Activated naive CD4-positive, alpha-beta T cell treated with anti-CD3 and anti-CD28 coated beads, Interleukin-2, amount 10 ng/mL, durations not matched to agents 7 days and 5 days (primary cell): ENCODE measurements at regions of chr14 and their contacts with region 1.

Region 1: DNA sequence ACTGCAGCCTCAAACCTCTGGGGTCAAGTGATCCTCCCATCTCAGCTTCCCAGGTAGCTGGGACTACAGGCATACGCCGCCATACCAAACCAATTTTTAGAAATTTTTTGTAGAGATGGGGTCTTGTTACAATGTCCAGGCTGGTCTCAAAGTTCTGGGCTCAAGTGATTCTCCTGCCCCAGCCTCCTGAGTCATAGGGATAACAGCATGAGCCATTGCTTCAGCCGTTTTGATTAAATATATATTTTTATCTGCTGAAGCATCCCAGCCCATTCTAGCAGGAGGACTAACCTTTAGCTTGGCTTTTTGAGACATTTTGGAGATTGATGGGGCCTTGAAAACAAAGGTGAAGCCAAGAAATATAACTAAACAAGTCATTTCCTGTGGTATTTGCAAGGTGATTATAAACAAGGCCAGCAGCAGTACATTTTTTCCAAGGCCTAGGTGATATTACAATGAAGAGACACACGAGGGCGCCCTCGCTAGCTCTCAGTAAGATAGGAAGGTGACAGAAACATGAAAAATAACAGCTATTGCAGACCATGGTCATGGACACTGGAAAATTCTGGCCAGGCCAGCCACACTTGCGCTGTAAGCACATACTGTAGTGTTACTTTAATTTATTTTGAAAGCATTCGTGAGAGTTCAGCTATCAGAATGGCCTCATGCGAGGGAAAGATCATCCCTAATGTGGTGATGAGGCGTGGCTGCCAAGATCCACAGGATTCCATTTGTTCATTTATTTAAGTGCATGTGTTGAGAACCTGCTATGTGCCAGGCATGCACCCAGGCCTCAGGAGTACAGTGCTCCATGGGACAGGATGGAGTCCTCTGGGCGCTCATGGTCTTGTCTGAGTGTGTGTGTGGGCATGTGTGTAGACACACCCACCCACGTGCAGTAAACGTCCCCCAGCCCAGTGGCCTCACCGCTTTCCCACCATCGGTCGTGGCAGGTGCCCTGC is 63.5 kb downstream of the DGLUCY start:
- DNase-seq: peak; percentile 81
- H3K4me3 Mint-ChIP-seq: no peak overlapping the region
- H3K27ac Mint-ChIP-seq: peak overlapping the region; percentile 90
- H3K4me1 Mint-ChIP-seq: peaks cover 20% of the 10 kb centered on the region
- H3K27me3 Mint-ChIP-seq: no peaks in the 10 kb centered on the region

Region 2: DNA sequence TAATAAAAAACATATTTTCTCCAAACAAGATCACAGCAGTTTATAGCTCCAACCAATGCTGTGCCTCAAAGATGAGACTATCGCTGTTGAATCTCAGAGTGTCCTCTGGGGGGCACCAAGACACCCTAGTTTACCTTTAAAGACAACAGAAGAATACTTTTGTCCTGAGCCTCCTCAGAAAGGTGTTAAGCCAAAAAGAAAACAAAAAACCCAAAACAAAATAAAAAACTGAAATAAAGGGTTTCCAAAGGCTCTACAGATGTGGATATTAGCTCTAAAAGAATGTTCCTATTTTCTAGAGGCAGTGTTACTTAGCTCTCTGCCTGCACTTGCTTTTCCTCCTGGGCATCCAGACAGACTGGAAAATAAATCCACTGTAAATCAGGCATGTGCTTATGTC is 274.3 kb before region 1 on chr14:
- CTCF ChIA-PET with region 1: interaction called, 161 read pairs
- DNase-seq: peak; percentile 74
- H3K4me3 Mint-ChIP-seq: no peak overlapping the region
- H3K27ac Mint-ChIP-seq: no peak overlapping the region
- H3K4me1 Mint-ChIP-seq: peaks cover 24% of the 10 kb centered on the region
- H3K27me3 Mint-ChIP-seq: no peaks in the 10 kb centered on the region

Region 3: DNA sequence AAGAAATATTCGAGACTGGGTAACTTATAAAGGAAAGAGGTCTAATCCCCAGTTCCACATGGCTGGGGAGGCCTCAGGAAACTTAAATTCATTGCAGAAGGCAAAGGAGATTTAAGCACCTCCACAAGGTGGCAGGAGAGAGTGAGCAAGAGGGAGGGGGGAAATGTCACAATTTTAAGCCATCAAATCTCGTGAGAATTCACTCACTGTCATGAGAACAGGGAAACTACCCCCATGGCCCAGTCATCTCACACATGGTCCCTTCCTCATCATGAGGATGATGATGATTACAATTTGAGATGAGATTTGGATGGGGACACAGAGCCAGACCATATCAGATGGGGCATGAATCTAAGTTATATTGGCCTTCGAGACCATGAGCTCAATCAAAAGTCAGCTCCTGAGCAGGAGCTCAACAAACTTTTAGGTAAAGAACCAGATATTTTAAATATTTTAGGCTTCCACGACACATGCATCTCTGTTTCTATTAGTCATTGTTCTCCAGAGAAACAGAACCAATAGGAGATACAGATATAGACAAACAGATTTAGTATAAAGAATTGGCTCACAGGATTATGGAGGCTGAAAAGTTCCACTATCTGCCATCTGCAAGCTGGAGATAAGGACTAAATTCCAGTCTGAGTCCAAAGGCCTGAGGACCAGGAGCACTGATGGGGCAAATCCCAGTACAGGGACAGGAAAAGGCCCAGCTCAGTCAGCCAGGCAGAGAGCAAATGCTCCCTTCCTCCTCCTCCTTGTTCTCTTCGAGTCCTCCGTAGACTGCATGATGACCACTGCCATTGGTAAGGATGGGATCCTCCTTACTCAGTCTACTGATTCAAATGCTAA is 38.6 kb before region 1 on chr14:
- CTCF ChIA-PET with region 1: interaction called, 38 read pairs
- DNase-seq: peak; percentile 67
- H3K4me3 Mint-ChIP-seq: no peak overlapping the region
- H3K27ac Mint-ChIP-seq: peak overlapping the region; percentile 53
- H3K4me1 Mint-ChIP-seq: peaks cover 59% of the 10 kb centered on the region
- H3K27me3 Mint-ChIP-seq: no peaks in the 10 kb centered on the region

Region 4: GRCh38 chr14:91228112-91229004 is 51.0 kb after region 1 on chr14:
- CTCF ChIA-PET with region 1: interaction called, 26 read pairs
- DNase-seq: peak; percentile 87
- H3K4me3 Mint-ChIP-seq: peak overlapping the region; percentile 21
- H3K27ac Mint-ChIP-seq: peak overlapping the region; percentile 99
- H3K4me1 Mint-ChIP-seq: peaks cover 94% of the 10 kb centered on the region
- H3K27me3 Mint-ChIP-seq: no peaks in the 10 kb centered on the region

Region 5: DNA sequence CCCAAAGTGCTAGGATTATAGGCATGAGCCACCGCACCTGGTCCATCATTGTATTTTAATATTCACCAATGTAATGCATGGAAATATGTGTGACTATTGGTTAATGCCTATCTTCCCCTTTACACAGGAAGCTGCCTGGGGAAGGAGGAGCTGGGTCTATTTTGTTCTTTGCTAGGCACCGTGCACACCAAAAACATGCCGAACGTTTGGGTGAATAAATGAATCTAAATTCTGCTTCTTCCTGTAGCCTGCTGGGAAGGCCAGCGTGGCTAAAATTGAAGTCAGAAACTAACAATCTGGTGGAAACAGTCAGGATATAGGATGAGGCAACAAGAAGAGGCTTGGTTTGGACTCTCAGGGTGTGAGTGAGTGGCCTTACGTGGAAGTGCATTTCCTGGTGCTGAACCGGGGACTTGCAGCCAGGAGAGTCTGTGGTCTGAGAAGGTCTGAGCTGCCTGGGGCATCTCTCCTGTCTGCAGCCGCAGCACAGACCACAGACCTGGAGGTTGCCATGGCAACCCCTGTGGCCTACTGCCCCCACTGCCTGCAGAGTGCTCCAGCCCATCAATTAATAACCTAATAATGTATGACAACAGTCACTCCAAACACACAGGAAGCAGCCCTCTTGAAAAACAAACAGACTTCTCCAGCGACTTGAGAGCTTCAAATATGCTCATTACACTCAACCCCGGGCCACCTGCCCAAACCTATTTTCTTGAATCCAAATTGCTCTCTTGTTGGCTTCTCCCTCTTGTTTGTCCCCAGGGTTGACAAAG is 72.7 kb after region 1 on chr14:
- CTCF ChIA-PET with region 1: interaction called, 70 read pairs
- DNase-seq: peak; percentile 68
- H3K4me3 Mint-ChIP-seq: peak overlapping the region; percentile 55
- H3K27ac Mint-ChIP-seq: peak overlapping the region; percentile 98
- H3K4me1 Mint-ChIP-seq: peaks cover 90% of the 10 kb centered on the region
- H3K27me3 Mint-ChIP-seq: no peaks in the 10 kb centered on the region

Region 6: GRCh38 chr14:91291786-91292405 is 114.5 kb after region 1 on chr14:
- CTCF ChIA-PET with region 1: interaction called, 229 read pairs
- DNase-seq: no peak
- H3K4me3 Mint-ChIP-seq: no peak overlapping the region
- H3K27ac Mint-ChIP-seq: peak overlapping the region; percentile 45
- H3K4me1 Mint-ChIP-seq: peaks cover 2% of the 10 kb centered on the region
- H3K27me3 Mint-ChIP-seq: no peaks in the 10 kb centered on the region